Head of caudate nucleus (tissue), 42 donors: ENCODE measurements at regions of chr5 and their contacts with region 1.

Region 1: DNA sequence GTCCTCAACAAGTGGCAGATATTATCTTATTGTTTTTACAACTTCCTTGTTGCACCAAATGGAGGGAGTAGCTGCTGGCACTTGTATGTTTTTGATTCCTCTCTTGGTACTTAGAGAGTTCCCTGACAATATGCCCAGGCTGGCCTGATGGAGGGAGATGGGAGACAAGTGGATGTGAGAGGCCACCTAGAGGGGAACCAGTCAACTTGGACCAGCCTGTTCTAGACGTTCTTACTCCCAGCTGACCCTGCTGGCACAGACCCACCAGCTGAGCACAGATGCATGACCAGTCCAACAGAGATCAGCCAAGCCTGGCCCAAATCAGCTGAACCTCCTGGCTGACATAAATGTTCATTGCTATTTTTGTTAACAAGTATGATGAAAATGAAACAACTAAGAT is 60.9 kb upstream of the GDNF start:
- DNase-seq: peak; percentile 8 to 81 (median 50)

Region 2: GRCh38 chr5:37717613-37718431 is 182.9 kb before region 1 on chr5:
- intact Hi-C with region 1: loop called (anchors 10 kb)
- DNase-seq: peak in 1 of 42 donors; percentile 51

Region 3: DNA sequence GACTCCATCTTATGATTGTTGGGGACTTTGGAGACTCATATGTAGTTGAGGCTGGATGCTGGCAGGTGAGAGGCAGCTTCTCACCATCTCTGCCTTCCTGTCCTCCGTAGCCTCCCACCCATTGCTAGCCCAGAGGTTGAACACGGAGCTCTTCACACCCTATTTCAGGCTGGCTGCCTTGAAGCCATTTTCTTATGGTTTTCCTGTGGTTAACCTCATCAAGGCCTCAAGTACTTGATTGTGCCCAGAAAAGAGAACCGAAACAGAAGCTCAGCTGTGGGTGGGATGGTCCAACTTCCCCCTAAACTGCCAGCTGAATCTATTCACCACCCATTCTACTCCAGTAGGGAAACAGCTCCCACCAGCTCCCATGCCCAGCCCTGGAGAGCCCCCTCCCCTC is 552.8 kb after region 1 on chr5:
- intact Hi-C with region 1: no loop called
- DNase-seq: peak in 2 of 42 donors; percentile 35 to 37